Tibial artery (tissue), 4 donors: ENCODE measurements at regions of chr20 and their contacts with region 1.

Region 1: GRCh38 chr20:2210646-2211552 is 84.9 kb upstream of the TGM3 start:
- DNase-seq: peak in 1 of 2 donors; percentile 24
- H3K4me3 ChIP-seq: no peak overlapping the region
- H3K27ac ChIP-seq: no peak overlapping the region
- H3K4me1 ChIP-seq: peaks cover 0 to 13% (median 7%) of the 10 kb centered on the region in 4 donors
- H3K27me3 ChIP-seq: peaks cover 0 to 45% of the 10 kb centered on the region in 2 donors
- CTCF ChIP-seq: no peak

Region 2: DNA sequence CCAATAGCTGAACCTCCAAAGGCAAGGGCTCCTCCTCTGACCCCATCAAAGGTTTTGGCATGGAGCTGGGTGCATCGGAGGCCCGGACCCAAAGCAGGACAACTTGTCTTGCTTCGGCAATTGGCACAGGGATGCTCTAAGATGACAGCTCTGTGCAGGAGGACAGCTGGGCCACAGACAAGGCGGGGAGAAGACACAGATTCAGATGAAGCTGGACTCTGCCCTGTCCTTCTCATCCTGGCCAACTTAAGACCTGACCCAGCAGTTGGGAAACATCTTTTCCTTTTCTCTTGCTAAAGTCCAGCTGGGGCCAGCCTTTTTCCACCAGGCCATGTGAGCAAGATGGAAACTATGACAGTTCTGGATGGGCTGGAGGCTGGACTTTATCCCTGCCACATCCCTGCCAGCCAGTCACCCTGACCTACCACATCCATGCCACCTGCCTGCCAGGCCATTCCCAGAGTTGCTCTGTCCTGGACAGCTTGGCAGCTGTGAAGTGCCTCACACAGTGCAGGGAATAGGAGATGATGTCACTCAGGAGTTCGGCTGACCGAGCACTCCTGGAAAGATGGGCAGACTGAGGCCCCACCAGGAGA is 1105.2 kb before region 1 on chr20:
- intact Hi-C with region 1: no loop called
- DNase-seq: no peak
- H3K4me3 ChIP-seq: no peak overlapping the region
- H3K27ac ChIP-seq: no peak overlapping the region
- H3K4me1 ChIP-seq: no peaks in the 10 kb centered on the region
- H3K27me3 ChIP-seq: no peaks in the 10 kb centered on the region
- CTCF ChIP-seq: no peak

Region 3: DNA sequence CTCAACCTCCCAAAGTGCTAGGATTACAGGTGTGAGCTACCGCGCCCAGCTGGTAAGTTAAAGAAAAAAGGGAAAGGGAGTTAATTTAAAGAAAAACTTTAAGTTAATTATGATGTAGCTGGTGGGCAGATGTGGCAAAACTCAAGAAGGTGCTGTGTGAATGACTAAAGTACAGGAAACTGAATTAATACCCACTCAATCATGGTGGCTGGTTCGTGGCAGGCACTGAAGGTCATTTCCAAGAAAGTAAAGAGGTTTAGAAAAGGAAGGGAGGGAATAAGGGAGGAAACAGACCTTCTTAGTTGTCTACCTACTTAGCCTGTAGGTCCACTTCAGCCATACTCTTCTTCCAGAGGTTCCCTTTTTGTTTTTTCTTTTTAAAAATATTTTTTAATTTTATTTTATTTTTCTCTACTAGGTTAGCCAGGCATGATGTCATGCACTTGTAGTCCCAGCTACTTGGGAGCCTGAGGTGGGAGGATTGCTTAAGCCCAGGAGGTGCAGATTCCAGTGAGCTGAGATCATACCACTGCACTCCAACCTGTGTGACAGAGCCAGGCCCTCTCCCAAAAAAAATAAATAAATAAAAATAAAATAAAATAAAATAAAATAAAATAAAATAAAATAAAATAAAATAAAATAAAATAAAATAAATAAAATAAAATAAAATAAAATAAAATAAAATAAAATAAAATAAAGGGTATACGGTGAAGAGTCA is 73.0 kb after region 1 on chr20:
- intact Hi-C with region 1: no loop called
- DNase-seq: no peak
- H3K4me3 ChIP-seq: no peak overlapping the region
- H3K27ac ChIP-seq: no peak overlapping the region
- H3K4me1 ChIP-seq: no peaks in the 10 kb centered on the region
- H3K27me3 ChIP-seq: no peaks in the 10 kb centered on the region
- CTCF ChIP-seq: no peak

Region 4: GRCh38 chr20:2301164-2301622 is 90.3 kb after region 1 on chr20:
- intact Hi-C with region 1: no loop called
- DNase-seq: peak; percentile 60 to 72
- H3K4me3 ChIP-seq: no peak overlapping the region
- H3K27ac ChIP-seq: no peak overlapping the region
- H3K4me1 ChIP-seq: no peaks in the 10 kb centered on the region
- H3K27me3 ChIP-seq: peaks cover 0 to 10% of the 10 kb centered on the region in 2 donors
- CTCF ChIP-seq: no peak

Region 5: GRCh38 chr20:2455771-2456497 is 245.0 kb after region 1 on chr20:
- intact Hi-C with region 1: loop called (anchors 5 kb)
- DNase-seq: no peak
- H3K4me3 ChIP-seq: no peak overlapping the region
- H3K27ac ChIP-seq: no peak overlapping the region
- H3K4me1 ChIP-seq: peaks cover 0 to 13% (median 2%) of the 10 kb centered on the region in 4 donors
- H3K27me3 ChIP-seq: no peaks in the 10 kb centered on the region
- CTCF ChIP-seq: no peak